Naive thymus-derived CD4-positive, alpha-beta T cell (primary cell): ENCODE measurements at regions of chr12 and their contacts with region 1.

Region 1: GRCh38 chr12:111812881-111813741 is 28.9 kb upstream of the MAPKAPK5 start:
- DNase-seq: peak; percentile 37 to 67 (median 57)
- ATAC-seq: peak; percentile 99
- H3K4me3 ChIP-seq: no peak overlapping the region
- H3K4me3 Mint-ChIP-seq: peak overlapping the region in 4 of 10 donors; percentile 5 to 39 (median 34)
- H3K27ac ChIP-seq: no peak overlapping the region
- H3K27ac Mint-ChIP-seq: peak overlapping the region in 2 of 9 donors; percentile 5 to 52
- H3K4me1 ChIP-seq: peaks cover 0 to 8% of the 10 kb centered on the region in 2 donors
- H3K4me1 Mint-ChIP-seq: peaks cover 5 to 11% (median 8%) of the 10 kb centered on the region in 7 donors
- H3K27me3 ChIP-seq: no peaks in the 10 kb centered on the region
- H3K27me3 Mint-ChIP-seq: peaks cover 0 to 12% (median 5%) of the 10 kb centered on the region in 5 donors

Region 2: GRCh38 chr12:111330800-111331752 is 482.0 kb before region 1 on chr12:
- CTCF ChIA-PET with region 1: no interaction called
- POLR2A ChIA-PET with region 1: no interaction called
- intact Hi-C with region 1: loop called in 1 of 2 experiments (anchors 1 kb)
- DNase-seq: no peak
- ATAC-seq: peak; percentile 37
- H3K4me3 ChIP-seq: no peak overlapping the region
- H3K4me3 Mint-ChIP-seq: no peak overlapping the region
- H3K27ac ChIP-seq: no peak overlapping the region
- H3K27ac Mint-ChIP-seq: no peak overlapping the region
- H3K4me1 ChIP-seq: no peaks in the 10 kb centered on the region
- H3K4me1 Mint-ChIP-seq: peaks cover 0 to 10% (median 4%) of the 10 kb centered on the region in 7 donors
- H3K27me3 ChIP-seq: no peaks in the 10 kb centered on the region
- H3K27me3 Mint-ChIP-seq: peaks cover 0 to 5% (median 2%) of the 10 kb centered on the region in 5 donors

Region 3: DNA sequence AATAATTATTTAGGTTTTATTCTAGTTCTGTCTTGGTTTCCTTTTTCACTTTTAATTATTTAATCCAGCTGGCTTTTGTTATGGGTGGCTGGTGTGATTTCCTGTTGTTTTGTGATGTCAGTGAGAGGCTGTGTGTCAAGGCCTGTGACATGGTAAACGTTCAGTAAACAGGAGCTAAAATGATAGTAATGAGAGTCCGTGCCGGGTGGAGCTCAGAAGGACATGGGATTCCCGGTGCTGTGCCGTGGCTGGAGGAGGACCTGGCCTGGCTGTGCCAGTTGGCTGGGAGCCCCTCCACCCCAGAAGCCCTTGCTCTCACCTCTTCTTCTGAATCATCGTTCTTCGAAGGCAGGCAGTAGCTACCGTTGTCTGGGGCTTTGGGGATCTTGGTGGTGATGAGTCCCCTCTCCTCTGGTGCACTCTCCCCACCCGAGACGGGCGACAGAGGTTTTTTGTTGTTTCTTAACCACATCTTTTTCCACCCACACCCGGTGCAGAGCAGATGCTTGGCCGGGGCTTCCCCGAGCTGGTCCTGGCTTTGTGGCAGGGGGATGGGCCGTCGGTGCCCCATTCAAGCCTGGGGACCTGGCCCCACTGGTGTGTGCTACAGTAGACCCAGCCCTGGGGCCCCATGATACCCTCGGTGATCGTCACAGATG is 378.3 kb before region 1 on chr12:
- CTCF ChIA-PET with region 1: no interaction called
- POLR2A ChIA-PET with region 1: no interaction called
- intact Hi-C with region 1: no loop called
- DNase-seq: peak; percentile 62 to 94 (median 83)
- ATAC-seq: peak; percentile 83
- H3K4me3 ChIP-seq: peak overlapping the region; percentile 56
- H3K4me3 Mint-ChIP-seq: peak overlapping the region; percentile 68 to 88 (median 85)
- H3K27ac ChIP-seq: peak overlapping the region; percentile 94
- H3K27ac Mint-ChIP-seq: peak overlapping the region; percentile 97 to 99 (median 99)
- H3K4me1 ChIP-seq: peaks cover 84% of the 10 kb centered on the region in 2 donors
- H3K4me1 Mint-ChIP-seq: peaks cover 79 to 96% (median 91%) of the 10 kb centered on the region in 7 donors
- H3K27me3 ChIP-seq: no peaks in the 10 kb centered on the region
- H3K27me3 Mint-ChIP-seq: no peaks in the 10 kb centered on the region

Region 4: DNA sequence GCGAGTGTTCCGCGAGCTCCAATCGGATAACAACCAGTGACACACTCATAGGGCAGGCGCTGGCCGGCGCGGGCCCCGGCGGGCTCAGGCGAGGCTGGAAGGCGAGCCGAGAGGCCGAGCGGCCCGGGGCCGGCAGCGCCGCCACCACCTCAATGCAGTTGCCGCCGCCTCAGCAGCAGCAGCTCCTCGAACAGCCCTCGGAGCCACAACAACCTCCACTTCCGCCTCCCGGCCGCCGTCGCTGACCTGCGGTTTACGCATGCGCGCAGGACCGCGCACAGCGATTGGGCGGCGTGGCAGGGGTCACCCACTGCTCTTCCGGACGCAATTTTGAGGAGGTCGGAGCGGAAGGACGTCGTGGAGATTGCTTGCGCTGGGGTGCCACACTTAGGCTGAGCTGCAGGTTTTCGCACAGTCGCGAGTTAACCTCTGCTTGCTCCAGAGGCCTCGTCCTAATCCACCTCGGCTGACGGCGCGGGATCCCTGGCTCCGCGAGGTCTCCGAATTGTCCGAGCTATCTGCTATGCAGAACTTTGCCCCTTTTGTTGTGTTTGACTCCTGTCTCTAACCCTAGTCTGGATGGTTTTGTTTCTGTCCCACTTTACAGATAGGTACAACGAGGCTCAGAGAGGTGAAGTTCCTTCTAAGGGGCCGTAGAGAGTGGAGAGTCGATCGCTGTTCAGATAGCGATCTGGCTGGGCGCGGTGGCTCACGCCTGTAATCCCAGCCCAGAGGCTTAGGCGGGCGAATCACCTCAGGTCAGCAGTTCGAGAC is 127.2 kb before region 1 on chr12 and contains the starts of genes ACAD10 and BRAP:
- CTCF ChIA-PET with region 1: no interaction called
- POLR2A ChIA-PET with region 1: no interaction called
- intact Hi-C with region 1: loop called (anchors 1 kb)
- DNase-seq: peak; percentile 82 to 98 (median 93)
- ATAC-seq: peak; percentile 96
- H3K4me3 ChIP-seq: peak within 1 kb of the TSS; percentile 90
- H3K4me3 Mint-ChIP-seq: peak within 1 kb of the TSS; percentile 90 to 98 (median 96)
- H3K27ac ChIP-seq: peak within 1 kb of the TSS; percentile 83
- H3K27ac Mint-ChIP-seq: peak within 1 kb of the TSS; percentile 90 to 98 (median 96)
- H3K4me1 ChIP-seq: peaks cover 17 to 18% of the 10 kb centered on the region in 2 donors
- H3K4me1 Mint-ChIP-seq: peaks cover 23 to 54% (median 44%) of the 10 kb centered on the region in 7 donors
- H3K27me3 ChIP-seq: no peaks in the 10 kb centered on the region
- H3K27me3 Mint-ChIP-seq: peaks cover 0 to 2% (median 0%) of the 10 kb centered on the region in 5 donors
- total RNA-seq, gene ACAD10: 28.4 to 65.3 (median 36.0) TPM
- total RNA-seq, gene BRAP: 19.5 to 25.5 (median 23.0) TPM

Region 5: GRCh38 chr12:111753144-111753881 is 59.8 kb before region 1 on chr12:
- CTCF ChIA-PET with region 1: no interaction called
- POLR2A ChIA-PET with region 1: no interaction called
- intact Hi-C with region 1: loop called (anchors 1 kb)
- DNase-seq: no peak
- ATAC-seq: no peak
- H3K4me3 ChIP-seq: no peak overlapping the region
- H3K4me3 Mint-ChIP-seq: no peak overlapping the region
- H3K27ac ChIP-seq: no peak overlapping the region
- H3K27ac Mint-ChIP-seq: peak overlapping the region in 1 of 9 donors; percentile 44
- H3K4me1 ChIP-seq: no peaks in the 10 kb centered on the region
- H3K4me1 Mint-ChIP-seq: peaks cover 0 to 12% (median 3%) of the 10 kb centered on the region in 7 donors
- H3K27me3 ChIP-seq: no peaks in the 10 kb centered on the region
- H3K27me3 Mint-ChIP-seq: no peaks in the 10 kb centered on the region

Region 6: GRCh38 chr12:111766608-111767361 is 46.3 kb before region 1 on chr12 and contains the start of gene ALDH2:
- CTCF ChIA-PET with region 1: no interaction called
- POLR2A ChIA-PET with region 1: no interaction called
- intact Hi-C with region 1: loop called in 1 of 2 experiments (anchors 5 kb)
- DNase-seq: peak in 6 of 9 donors; percentile 2 to 39 (median 14)
- ATAC-seq: peak; percentile 81
- H3K4me3 ChIP-seq: peak within 1 kb of the TSS; percentile 47
- H3K4me3 Mint-ChIP-seq: peak within 1 kb of the TSS; percentile 62 to 91 (median 84)
- H3K27ac ChIP-seq: no peak within 1 kb of the TSS
- H3K27ac Mint-ChIP-seq: peak within 1 kb of the TSS in 3 of 9 donors; percentile 2 to 65 (median 5)
- H3K4me1 ChIP-seq: peaks cover 0 to 8% of the 10 kb centered on the region in 2 donors
- H3K4me1 Mint-ChIP-seq: peaks cover 11 to 23% (median 15%) of the 10 kb centered on the region in 7 donors
- H3K27me3 ChIP-seq: peaks cover 0 to 3% of the 10 kb centered on the region in 2 donors
- H3K27me3 Mint-ChIP-seq: peaks cover 34 to 55% (median 47%) of the 10 kb centered on the region in 5 donors
- total RNA-seq, gene ALDH2: 0.46 to 69.3 (median 3.4) TPM